Endothelial cell of umbilical vein (primary cell): ENCODE measurements at regions of chr2 and their contacts with region 1.

Region 1: DNA sequence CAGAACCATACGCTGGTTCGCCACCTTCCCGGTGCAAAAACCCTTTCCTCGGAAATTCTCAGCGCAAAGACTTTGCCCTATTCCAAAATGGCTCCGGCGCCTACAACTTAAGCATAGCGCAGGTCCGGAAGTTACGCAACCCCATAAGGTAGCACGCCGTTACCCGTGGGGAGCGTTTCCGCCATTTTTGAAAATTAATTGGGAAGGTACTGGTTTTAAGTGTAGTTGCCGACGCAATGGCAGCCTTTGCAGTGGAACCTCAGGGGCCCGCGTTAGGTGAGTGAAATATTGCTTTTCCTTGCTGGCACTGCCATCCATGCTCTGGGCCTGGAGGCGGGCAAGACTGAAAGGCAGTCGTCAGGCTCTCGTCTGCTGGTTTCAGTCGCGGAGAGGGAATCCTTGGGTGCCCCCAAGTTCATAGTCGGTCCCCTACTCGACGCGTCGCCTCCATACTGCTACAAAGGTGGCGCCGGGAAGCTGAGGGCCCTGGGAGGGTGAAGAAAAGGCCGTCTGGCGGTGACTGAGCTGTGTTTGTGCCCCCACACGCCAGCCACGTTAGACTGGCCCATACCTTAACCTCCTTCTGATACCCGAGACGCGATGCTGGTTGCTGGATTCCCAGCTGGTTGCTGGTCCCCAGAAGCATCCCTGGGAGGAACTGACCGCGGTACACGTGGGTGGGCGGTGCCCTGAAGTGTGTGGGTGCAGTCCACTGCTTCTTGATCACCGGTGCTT is at the start of gene NUP35:
- DNase-seq: peak; percentile 98
- H3K4me3 ChIP-seq: peak within 1 kb of the TSS; percentile 61 to 81 (median 72)
- H3K27ac ChIP-seq: peak within 1 kb of the TSS; percentile 71
- H3K4me1 ChIP-seq: peaks cover 12% of the 10 kb centered on the region
- H3K27me3 ChIP-seq: no peaks in the 10 kb centered on the region
- CTCF ChIP-seq: no peak
- POLR2A ChIP-seq: peak; percentile 42
- total RNA-seq, gene NUP35: 18.5 and 22.1 TPM in 2 replicates

Region 2: GRCh38 chr2:183010112-183010511 is 114.3 kb before region 1 on chr2:
- CTCF ChIA-PET with region 1: no interaction called
- POLR2A ChIA-PET with region 1: no interaction called
- dilution Hi-C with region 1: no loop called
- intact Hi-C with region 1: no loop called
- DNase-seq: peak; percentile 24
- H3K4me3 ChIP-seq: no peak overlapping the region
- H3K27ac ChIP-seq: no peak overlapping the region
- H3K4me1 ChIP-seq: no peaks in the 10 kb centered on the region
- H3K27me3 ChIP-seq: no peaks in the 10 kb centered on the region
- CTCF ChIP-seq: no peak
- POLR2A ChIP-seq: no peak

Region 3: DNA sequence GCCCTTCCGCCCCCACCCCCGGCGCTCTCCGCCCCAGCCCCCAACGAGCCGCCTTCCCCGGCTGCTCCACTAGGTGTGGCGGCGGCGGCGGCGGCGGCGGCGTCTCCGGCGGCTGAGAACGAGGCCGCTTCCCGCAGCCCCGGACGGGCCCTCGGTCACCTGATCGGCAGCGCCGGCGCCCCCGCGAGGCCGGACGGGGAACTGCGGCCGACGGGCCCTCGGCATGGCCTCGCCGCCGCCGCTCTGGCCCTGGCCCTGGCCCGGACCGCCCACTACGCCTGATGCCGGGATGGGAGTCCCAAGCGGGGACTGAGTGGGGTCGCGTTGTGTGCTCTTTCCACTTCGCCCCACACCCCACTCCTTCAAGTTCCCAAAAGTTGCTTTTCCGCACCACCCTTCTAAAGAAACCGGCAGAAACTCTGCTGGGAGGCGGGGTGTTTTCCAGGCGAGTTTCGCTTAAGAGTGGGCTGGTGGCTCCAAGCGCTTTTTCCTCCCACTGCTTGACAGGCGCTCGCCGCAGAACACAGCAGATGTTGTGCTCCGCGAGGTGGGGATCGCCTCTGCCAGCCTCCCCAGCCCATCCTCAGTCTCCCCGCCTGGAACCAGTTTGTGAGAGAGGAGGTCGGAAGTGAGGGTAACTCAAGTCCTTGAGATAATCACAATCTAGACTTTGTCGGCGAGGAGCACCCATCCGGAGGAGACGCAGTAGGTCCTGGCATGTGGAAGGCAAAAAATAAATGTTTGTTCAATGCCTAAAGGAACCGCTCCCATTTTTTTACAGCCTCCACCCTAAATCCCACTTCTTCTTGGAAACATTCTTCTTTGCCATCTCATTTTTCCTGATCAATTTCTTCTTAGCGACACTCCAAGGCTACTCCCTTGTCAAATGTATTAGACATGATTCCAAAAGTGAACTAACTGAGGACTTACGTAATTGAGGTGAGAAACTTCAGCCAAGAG is 85.8 kb before region 1 on chr2 and contains the start of gene NCKAP1:
- CTCF ChIA-PET with region 1: no interaction called
- POLR2A ChIA-PET with region 1: no interaction called
- dilution Hi-C with region 1: no loop called
- intact Hi-C with region 1: loop called (anchors 1 kb)
- DNase-seq: peak; percentile 88
- H3K4me3 ChIP-seq: peak within 1 kb of the TSS; percentile 86 to 99 (median 98)
- H3K27ac ChIP-seq: peak within 1 kb of the TSS; percentile 91
- H3K4me1 ChIP-seq: peaks cover 28% of the 10 kb centered on the region
- H3K27me3 ChIP-seq: peaks cover 5 to 7% of the 10 kb centered on the region in 2 experiments
- CTCF ChIP-seq: peak; percentile 68 to 83
- POLR2A ChIP-seq: no peak
- total RNA-seq, gene NCKAP1: 121 and 130 TPM in 2 replicates

Region 4: GRCh38 chr2:183070942-183071844 is 53.2 kb before region 1 on chr2:
- CTCF ChIA-PET with region 1: interaction called, 5 read pairs
- POLR2A ChIA-PET with region 1: no interaction called
- dilution Hi-C with region 1: no loop called
- intact Hi-C with region 1: loop called (anchors 2 kb)
- DNase-seq: peak; percentile 61
- H3K4me3 ChIP-seq: no peak overlapping the region
- H3K27ac ChIP-seq: no peak overlapping the region
- H3K4me1 ChIP-seq: no peaks in the 10 kb centered on the region
- H3K27me3 ChIP-seq: peaks cover 17 to 25% of the 10 kb centered on the region in 2 experiments
- CTCF ChIP-seq: peak; percentile 56 to 82
- POLR2A ChIP-seq: no peak

Region 5: DNA sequence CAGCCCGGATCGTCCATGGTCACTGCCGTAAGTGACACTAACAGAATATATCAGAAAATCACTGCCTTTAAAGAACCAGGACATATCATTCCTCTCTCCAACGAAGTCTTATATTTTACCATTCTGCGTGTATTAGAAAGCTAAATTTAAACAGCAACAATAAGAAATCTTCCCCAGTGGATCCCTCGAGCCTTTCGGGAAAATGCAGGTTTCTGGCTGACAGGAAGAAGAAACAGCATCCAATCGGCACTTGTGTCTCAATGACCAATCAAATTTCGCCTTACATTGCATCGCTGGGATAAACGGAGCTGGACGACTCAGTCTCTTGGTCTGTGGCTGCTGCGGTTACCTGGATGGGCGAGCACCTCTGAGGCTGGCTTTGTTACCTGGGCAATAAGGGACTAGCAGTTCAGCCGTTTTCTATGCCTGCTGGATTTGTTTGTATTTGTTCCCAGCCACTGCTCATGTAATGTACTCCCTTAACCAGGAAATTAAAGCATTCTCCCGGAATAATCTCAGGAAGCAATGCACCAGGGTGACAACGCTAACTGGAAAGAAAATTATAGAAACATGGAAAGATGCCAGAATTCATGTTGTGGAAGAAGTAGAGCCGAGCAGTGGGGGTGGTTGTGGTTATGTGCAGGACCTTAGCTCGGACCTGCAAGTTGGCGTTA is 45.8 kb before region 1 on chr2 and contains the start of gene DUSP19:
- CTCF ChIA-PET with region 1: interaction called, 4 read pairs
- POLR2A ChIA-PET with region 1: no interaction called
- dilution Hi-C with region 1: no loop called
- intact Hi-C with region 1: loop called (anchors 1 kb)
- DNase-seq: peak; percentile 97
- H3K4me3 ChIP-seq: peak within 1 kb of the TSS; percentile 65 to 97 (median 89)
- H3K27ac ChIP-seq: peak within 1 kb of the TSS; percentile 79
- H3K4me1 ChIP-seq: peaks cover 12% of the 10 kb centered on the region
- H3K27me3 ChIP-seq: peaks cover 17 to 23% of the 10 kb centered on the region in 2 experiments
- CTCF ChIP-seq: no peak
- POLR2A ChIP-seq: peak; percentile 83
- total RNA-seq, gene DUSP19: 1.7 and 1.9 TPM in 2 replicates

Region 6: DNA sequence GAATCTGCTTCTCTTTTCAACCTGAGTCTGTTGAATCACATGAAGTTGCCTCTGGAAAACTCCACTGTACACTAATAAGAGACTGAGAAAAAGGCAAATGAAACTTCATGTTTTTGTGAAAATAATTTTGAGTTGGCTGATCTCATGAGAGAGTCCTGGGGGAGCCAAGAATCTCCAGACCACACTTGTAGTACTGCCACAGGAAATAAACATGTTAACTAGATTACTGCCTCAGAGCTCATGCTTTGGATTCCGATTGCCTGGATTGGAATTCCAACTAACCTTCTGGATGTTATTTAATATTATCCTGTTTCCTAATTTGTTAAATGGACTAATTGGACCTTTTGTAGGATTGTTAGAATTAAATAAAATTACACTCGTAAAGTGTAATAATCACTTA is 25.1 kb after region 1 on chr2:
- CTCF ChIA-PET with region 1: no interaction called
- POLR2A ChIA-PET with region 1: no interaction called
- dilution Hi-C with region 1: no loop called
- intact Hi-C with region 1: no loop called
- DNase-seq: peak; percentile 8
- H3K4me3 ChIP-seq: no peak overlapping the region
- H3K27ac ChIP-seq: no peak overlapping the region
- H3K4me1 ChIP-seq: no peaks in the 10 kb centered on the region
- H3K27me3 ChIP-seq: no peaks in the 10 kb centered on the region
- CTCF ChIP-seq: no peak
- POLR2A ChIP-seq: no peak